ENCODE measurements at regions of chr1 and their contacts with region 1.

Region 1: DNA sequence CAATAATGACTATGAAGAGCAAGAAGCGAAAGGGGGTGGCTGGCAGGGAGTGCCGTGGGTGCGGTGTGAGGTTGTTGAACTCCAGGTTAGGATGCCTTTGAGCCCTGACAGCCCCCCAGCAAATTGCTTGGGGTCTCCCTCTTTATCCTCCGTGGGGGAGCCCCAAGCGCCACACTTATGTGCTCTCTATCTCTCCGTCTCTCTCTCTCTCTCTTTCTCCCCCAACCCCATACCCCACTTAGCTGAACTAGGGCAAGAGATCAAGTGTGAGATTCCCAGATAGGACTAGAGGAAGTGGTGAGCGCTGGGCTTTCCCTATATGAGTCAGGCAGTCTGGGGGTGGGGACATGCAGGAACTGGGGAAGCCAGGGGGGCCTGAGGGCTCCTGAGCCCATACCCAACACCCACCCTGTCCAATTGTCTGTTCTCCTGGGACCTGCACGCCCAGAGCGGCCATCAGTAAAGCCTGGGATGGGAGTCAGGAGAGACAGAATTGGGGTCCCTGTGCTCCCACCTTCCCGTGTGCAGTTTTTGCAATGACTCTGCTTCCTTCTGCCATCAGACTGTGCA is 7.8 kb downstream of the EFHD2 start:
- DNase-seq: peak; percentile 75 to 89
- ATAC-seq: peak; percentile 57 to 85 (median 75)
- H3K4me3 ChIP-seq: no peak overlapping the region
- H3K4me3 Mint-ChIP-seq: peak overlapping the region; percentile 97
- H3K27ac ChIP-seq: peak overlapping the region; percentile 99
- H3K27ac Mint-ChIP-seq: peak overlapping the region; percentile 93 to 100
- H3K4me1 ChIP-seq: peaks cover 98% of the 10 kb centered on the region
- H3K4me1 Mint-ChIP-seq: peaks cover 85 to 89% of the 10 kb centered on the region in 2 donors
- H3K27me3 ChIP-seq: no peaks in the 10 kb centered on the region
- H3K27me3 Mint-ChIP-seq: no peaks in the 10 kb centered on the region
- CTCF ChIP-seq: no peak

Region 2: DNA sequence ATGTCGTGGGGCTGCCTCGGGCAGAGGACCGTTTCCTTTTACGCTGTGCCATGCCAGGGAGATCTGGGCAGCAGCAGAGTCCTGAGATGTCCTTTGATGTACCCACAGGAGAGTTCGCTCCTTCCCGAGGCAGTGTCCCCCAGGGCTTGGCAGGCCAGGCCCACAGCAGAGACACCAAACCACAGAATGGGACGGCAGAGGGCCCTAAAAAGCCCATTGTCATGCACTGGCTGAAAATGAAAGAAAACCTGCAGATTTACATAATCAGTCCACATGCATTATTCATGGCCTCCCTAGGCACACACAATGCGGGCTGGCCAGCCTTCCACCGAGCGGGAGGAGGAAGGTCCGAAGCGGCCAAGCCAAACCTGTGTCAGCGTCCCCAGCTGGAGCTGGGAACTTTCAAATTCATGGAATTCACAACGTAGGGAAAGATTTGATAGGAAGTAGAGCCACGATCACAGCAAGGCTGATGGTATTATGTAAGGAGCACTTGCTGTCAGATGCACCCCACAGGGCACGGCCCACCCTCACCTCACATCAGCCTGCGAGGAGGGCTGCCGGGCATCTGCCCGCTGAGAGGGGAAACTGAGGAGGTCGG is 33.0 kb before region 1 on chr1:
- intact Hi-C with region 1: loop called (anchors 5 kb)
- DNase-seq: peak; percentile 20 to 29
- ATAC-seq: peak; percentile 67 to 75 (median 72)
- H3K4me3 ChIP-seq: peak overlapping the region; percentile 36
- H3K4me3 Mint-ChIP-seq: peak overlapping the region; percentile 93
- H3K27ac ChIP-seq: peak overlapping the region; percentile 63
- H3K27ac Mint-ChIP-seq: peak overlapping the region; percentile 87 to 88
- H3K4me1 ChIP-seq: peaks cover 38% of the 10 kb centered on the region
- H3K4me1 Mint-ChIP-seq: peaks cover 34 to 55% of the 10 kb centered on the region in 2 donors
- H3K27me3 ChIP-seq: no peaks in the 10 kb centered on the region
- H3K27me3 Mint-ChIP-seq: no peaks in the 10 kb centered on the region
- CTCF ChIP-seq: no peak

Region 3: GRCh38 chr1:15430787-15431570 is 13.5 kb after region 1 on chr1:
- intact Hi-C with region 1: loop called (anchors 2 kb)
- DNase-seq: peak; percentile 84
- ATAC-seq: peak; percentile 51 to 76 (median 57)
- H3K4me3 ChIP-seq: no peak overlapping the region
- H3K4me3 Mint-ChIP-seq: peak overlapping the region; percentile 45
- H3K27ac ChIP-seq: peak overlapping the region; percentile 52
- H3K27ac Mint-ChIP-seq: peak overlapping the region; percentile 88 to 93
- H3K4me1 ChIP-seq: peaks cover 51% of the 10 kb centered on the region
- H3K4me1 Mint-ChIP-seq: peaks cover 45 to 68% of the 10 kb centered on the region in 2 donors
- H3K27me3 ChIP-seq: no peaks in the 10 kb centered on the region
- H3K27me3 Mint-ChIP-seq: no peaks in the 10 kb centered on the region
- CTCF ChIP-seq: peak; percentile 96

Region 4: GRCh38 chr1:15454256-15454655 is 36.8 kb after region 1 on chr1:
- intact Hi-C with region 1: no loop called
- DNase-seq: no peak
- ATAC-seq: no peak
- H3K4me3 ChIP-seq: no peak overlapping the region
- H3K4me3 Mint-ChIP-seq: no peak overlapping the region
- H3K27ac ChIP-seq: no peak overlapping the region
- H3K27ac Mint-ChIP-seq: no peak overlapping the region
- H3K4me1 ChIP-seq: no peaks in the 10 kb centered on the region
- H3K4me1 Mint-ChIP-seq: no peaks in the 10 kb centered on the region
- H3K27me3 ChIP-seq: no peaks in the 10 kb centered on the region
- H3K27me3 Mint-ChIP-seq: peaks cover 5 to 9% of the 10 kb centered on the region in 2 donors
- CTCF ChIP-seq: no peak

Region 5: GRCh38 chr1:15640667-15641066 is 223.2 kb after region 1 on chr1:
- intact Hi-C with region 1: no loop called
- DNase-seq: no peak
- ATAC-seq: no peak
- H3K4me3 ChIP-seq: no peak overlapping the region
- H3K4me3 Mint-ChIP-seq: no peak overlapping the region
- H3K27ac ChIP-seq: no peak overlapping the region
- H3K27ac Mint-ChIP-seq: peak overlapping the region in 1 of 2 donors; percentile 3
- H3K4me1 ChIP-seq: no peaks in the 10 kb centered on the region
- H3K4me1 Mint-ChIP-seq: peaks cover 0 to 6% of the 10 kb centered on the region in 2 donors
- H3K27me3 ChIP-seq: no peaks in the 10 kb centered on the region
- H3K27me3 Mint-ChIP-seq: no peaks in the 10 kb centered on the region
- CTCF ChIP-seq: no peak

Measured in natural killer cell (primary cell).